Heart left ventricle (tissue), 16 donors: ENCODE measurements at regions of chr4 and their contacts with region 1.

Region 1: GRCh38 chr4:112031712-112032328 is 113.4 kb upstream of the FAM241A start:
- DNase-seq: no peak
- ATAC-seq: no peak
- H3K4me3 ChIP-seq: no peak overlapping the region
- H3K27ac ChIP-seq: no peak overlapping the region
- H3K4me1 ChIP-seq: no peaks in the 10 kb centered on the region
- H3K27me3 ChIP-seq: peaks cover 0 to 50% (median 2%) of the 10 kb centered on the region in 9 donors
- CTCF ChIP-seq: peak; percentile 26 to 66 (median 48)
- POLR2A ChIP-seq: no peak

Region 2: DNA sequence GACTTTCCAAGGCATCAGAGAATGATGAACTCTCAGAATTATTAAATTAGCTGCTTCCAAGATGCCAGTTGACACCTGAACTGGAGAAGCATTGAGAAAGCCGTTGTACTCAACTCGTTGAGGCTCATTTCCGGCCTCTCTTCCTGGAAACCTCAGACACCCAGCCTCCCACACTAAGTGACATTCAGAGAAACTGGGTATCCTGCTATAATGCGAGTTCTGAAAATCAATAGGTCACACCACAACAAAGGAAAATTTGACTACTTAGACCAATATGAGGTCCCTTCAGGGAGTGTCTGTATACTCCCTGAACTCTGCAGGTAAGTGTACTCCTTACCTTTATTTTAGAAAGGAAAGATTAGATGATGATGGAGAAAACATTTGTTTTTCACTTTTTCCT is 1504.7 kb before region 1 on chr4:
- intact Hi-C with region 1: loop called in 1 of 10 experiments (anchors 10 kb)
- DNase-seq: no peak
- ATAC-seq: no peak
- H3K4me3 ChIP-seq: no peak overlapping the region
- H3K27ac ChIP-seq: no peak overlapping the region
- H3K4me1 ChIP-seq: no peaks in the 10 kb centered on the region
- H3K27me3 ChIP-seq: no peaks in the 10 kb centered on the region
- CTCF ChIP-seq: no peak
- POLR2A ChIP-seq: no peak

Region 3: GRCh38 chr4:111631215-111631999 is 400.4 kb before region 1 on chr4:
- intact Hi-C with region 1: loop called in 1 of 10 experiments (anchors 10 kb)
- DNase-seq: no peak
- ATAC-seq: no peak
- H3K4me3 ChIP-seq: no peak overlapping the region
- H3K27ac ChIP-seq: no peak overlapping the region
- H3K4me1 ChIP-seq: no peaks in the 10 kb centered on the region
- H3K27me3 ChIP-seq: peaks cover 0 to 26% (median 0%) of the 10 kb centered on the region in 9 donors
- CTCF ChIP-seq: peak in 7 of 12 donors; percentile 6 to 36 (median 23)
- POLR2A ChIP-seq: no peak

Region 4: GRCh38 chr4:111641955-111642579 is 389.8 kb before region 1 on chr4:
- intact Hi-C with region 1: loop called in 6 of 10 experiments (anchors 5 to 10 kb)
- DNase-seq: peak in 3 of 5 donors; percentile 14 to 33 (median 32)
- ATAC-seq: peak in 3 of 4 donors; percentile 50 to 64 (median 61)
- H3K4me3 ChIP-seq: no peak overlapping the region
- H3K27ac ChIP-seq: no peak overlapping the region
- H3K4me1 ChIP-seq: no peaks in the 10 kb centered on the region
- H3K27me3 ChIP-seq: peaks cover 0 to 6% (median 0%) of the 10 kb centered on the region in 9 donors
- CTCF ChIP-seq: peak; percentile 36 to 78 (median 64)
- POLR2A ChIP-seq: no peak

Region 5: GRCh38 chr4:111652236-111652635 is 379.6 kb before region 1 on chr4:
- intact Hi-C with region 1: loop called in 3 of 10 experiments (anchors 5 to 10 kb)
- DNase-seq: no peak
- ATAC-seq: no peak
- H3K4me3 ChIP-seq: no peak overlapping the region
- H3K27ac ChIP-seq: no peak overlapping the region
- H3K4me1 ChIP-seq: no peaks in the 10 kb centered on the region
- H3K27me3 ChIP-seq: peaks cover 0 to 29% (median 0%) of the 10 kb centered on the region in 9 donors
- CTCF ChIP-seq: no peak
- POLR2A ChIP-seq: no peak

Region 6: DNA sequence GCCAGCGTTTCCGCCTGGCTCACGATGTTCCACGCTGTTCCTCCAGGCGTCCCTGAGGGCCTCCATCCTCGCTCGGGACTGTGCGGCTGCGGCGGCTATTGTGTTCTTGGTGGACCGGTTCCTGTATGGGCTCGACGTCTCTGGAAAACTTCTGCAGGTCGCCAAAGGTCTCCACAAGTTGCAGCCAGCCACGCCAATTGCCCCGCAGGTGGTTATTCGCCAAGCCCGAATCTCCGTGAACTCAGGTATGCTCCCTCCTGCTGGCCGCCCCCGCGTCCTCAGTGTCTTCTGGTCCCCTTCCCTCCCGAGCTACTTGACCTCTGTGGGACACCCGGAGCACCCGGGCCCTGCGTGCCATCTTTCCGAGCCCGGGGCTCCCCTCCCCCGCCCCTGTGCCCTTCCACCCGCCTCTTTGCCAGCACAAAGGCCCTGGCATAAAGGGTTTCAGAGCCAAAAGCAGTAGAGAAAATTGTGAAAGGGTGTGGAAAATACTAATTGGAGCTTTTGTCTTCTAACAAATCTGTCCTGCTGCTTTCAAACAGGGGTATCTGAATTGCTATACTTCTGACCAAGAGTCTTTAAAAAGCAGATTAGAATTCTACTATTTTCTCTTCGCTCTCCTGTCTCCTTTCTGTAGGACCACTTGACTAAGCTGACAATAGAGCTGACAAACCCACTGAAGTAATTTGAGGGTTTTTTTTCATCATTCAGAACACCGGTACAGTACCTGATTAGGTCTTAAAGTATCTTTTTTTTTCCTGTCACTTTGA is 380.1 kb after region 1 on chr4:
- intact Hi-C with region 1: no loop called
- DNase-seq: peak in 2 of 5 donors; percentile 34 to 49
- ATAC-seq: no peak
- H3K4me3 ChIP-seq: no peak overlapping the region
- H3K27ac ChIP-seq: no peak overlapping the region
- H3K4me1 ChIP-seq: no peaks in the 10 kb centered on the region
- H3K27me3 ChIP-seq: no peaks in the 10 kb centered on the region
- CTCF ChIP-seq: no peak
- POLR2A ChIP-seq: no peak